Activated naive CD4-positive, alpha-beta T cell treated with anti-CD3 and anti-CD28 coated beads for 36 hours (primary cell): ENCODE measurements at regions of chr7 and their contacts with region 1.

Region 1: DNA sequence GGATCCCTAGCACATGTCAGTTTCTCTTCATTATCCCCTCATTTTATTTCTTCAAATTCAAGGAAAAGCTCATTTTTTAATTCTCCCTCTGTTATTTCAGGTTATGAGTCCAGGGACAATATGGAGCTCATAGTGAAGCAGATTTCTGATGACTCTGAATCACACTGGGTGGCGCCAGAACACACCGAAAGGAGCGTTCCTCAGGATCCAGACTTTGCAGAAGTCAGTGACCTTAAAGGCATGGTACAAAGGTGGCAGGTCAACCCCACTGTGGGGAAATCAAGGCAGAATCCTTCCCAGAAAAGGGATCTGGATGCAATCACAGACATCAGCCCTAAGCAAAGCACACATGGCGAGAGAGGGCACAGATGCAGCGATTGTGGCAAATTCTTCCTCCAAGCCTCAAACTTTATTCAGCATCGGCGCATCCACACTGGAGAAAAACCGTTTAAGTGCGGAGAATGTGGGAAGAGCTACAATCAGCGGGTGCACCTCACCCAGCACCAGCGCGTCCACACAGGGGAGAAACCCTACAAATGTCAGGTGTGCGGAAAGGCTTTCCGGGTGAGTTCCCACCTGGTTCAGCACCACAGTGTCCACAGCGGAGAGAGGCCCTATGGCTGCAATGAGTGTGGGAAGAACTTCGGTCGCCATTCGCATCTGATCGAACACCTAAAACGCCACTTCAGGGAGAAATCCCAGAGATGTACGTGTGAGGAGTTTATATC is 21.4 kb downstream of the ZKSCAN5 start:
- DNase-seq: peak; percentile 64
- H3K4me3 Mint-ChIP-seq: no peak overlapping the region
- H3K27ac Mint-ChIP-seq: no peak overlapping the region
- H3K4me1 Mint-ChIP-seq: no peaks in the 10 kb centered on the region
- H3K27me3 Mint-ChIP-seq: no peaks in the 10 kb centered on the region

Region 2: GRCh38 chr7:99050971-99051370 is 474.9 kb before region 1 on chr7:
- CTCF ChIA-PET with region 1: no interaction called
- intact Hi-C with region 1: no loop called
- DNase-seq: no peak
- H3K4me3 Mint-ChIP-seq: no peak overlapping the region
- H3K27ac Mint-ChIP-seq: peak overlapping the region; percentile 28
- H3K4me1 Mint-ChIP-seq: peaks cover 15% of the 10 kb centered on the region
- H3K27me3 Mint-ChIP-seq: no peaks in the 10 kb centered on the region

Region 3: GRCh38 chr7:99837649-99838361 is 311.9 kb after region 1 on chr7:
- CTCF ChIA-PET with region 1: interaction called, 7 read pairs
- intact Hi-C with region 1: loop called (anchors 1 kb)
- DNase-seq: no peak
- H3K4me3 Mint-ChIP-seq: no peak overlapping the region
- H3K27ac Mint-ChIP-seq: no peak overlapping the region
- H3K4me1 Mint-ChIP-seq: peaks cover 16% of the 10 kb centered on the region
- H3K27me3 Mint-ChIP-seq: no peaks in the 10 kb centered on the region

Region 4: DNA sequence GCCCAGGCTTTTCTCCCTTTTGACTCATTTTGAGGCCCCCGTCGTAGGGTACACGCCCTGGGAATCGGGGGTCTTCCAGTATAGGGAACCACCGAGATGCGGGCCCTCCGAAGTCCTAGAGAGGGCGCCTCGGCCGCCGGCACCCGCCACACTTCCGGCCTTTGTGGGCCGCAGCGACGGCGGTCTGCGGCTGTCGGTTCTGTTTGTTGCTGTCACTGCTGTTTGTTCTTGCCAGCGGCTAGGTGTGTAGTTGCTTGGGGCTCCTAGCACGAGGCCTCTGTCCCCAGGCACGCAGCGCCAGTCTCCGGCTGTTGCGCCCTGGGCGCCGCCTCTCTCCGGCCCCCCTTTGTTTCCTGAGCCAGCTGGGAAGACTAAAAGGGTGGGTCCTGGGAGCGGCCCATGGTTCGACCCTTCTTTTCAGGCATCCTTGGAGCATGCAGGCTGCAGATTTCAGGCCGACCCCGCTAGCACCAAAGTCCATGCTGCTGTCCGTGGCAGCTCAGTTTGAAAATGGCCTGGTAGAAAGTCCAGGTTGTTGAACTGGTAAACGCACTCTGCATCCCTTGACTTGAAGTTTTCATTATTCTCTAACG is 471.8 kb after region 1 on chr7:
- CTCF ChIA-PET with region 1: no interaction called
- intact Hi-C with region 1: loop called (anchors 10 kb)
- DNase-seq: peak; percentile 78
- H3K4me3 Mint-ChIP-seq: peak overlapping the region; percentile 69
- H3K27ac Mint-ChIP-seq: peak overlapping the region; percentile 78
- H3K4me1 Mint-ChIP-seq: peaks cover 10% of the 10 kb centered on the region
- H3K27me3 Mint-ChIP-seq: no peaks in the 10 kb centered on the region